SK-N-SH (cell line): ENCODE measurements at regions of chr16 and their contacts with region 1.

Region 1: GRCh38 chr16:23060458-23061320 is 88.6 kb downstream of the USP31 start:
- DNase-seq: peak; percentile 75
- H3K4me3 ChIP-seq: no peak overlapping the region; a peak in 1 of 4 replicates
- H3K27ac ChIP-seq: no peak overlapping the region
- H3K4me1 ChIP-seq: peaks cover 0 to 2% of the 10 kb centered on the region in 2 experiments; a peak in 1 of 4 replicates
- H3K27me3 ChIP-seq: no peaks in the 10 kb centered on the region
- CTCF ChIP-seq: peak; percentile 85
- EP300 ChIP-seq: no peak
- RAD21 ChIP-seq: peak; percentile 92

Region 2: GRCh38 chr16:23013481-23013880 is 47.2 kb before region 1 on chr16:
- CTCF ChIA-PET with region 1: interaction called, 14 read pairs
- POLR2A ChIA-PET with region 1: no interaction called
- DNase-seq: no peak
- H3K4me3 ChIP-seq: no peak overlapping the region
- H3K27ac ChIP-seq: no peak overlapping the region
- H3K4me1 ChIP-seq: no peaks in the 10 kb centered on the region
- H3K27me3 ChIP-seq: no peaks in the 10 kb centered on the region
- CTCF ChIP-seq: peak; percentile 25; the same call in 1 of the 2 replicates
- EP300 ChIP-seq: no peak
- RAD21 ChIP-seq: no peak

Region 3: DNA sequence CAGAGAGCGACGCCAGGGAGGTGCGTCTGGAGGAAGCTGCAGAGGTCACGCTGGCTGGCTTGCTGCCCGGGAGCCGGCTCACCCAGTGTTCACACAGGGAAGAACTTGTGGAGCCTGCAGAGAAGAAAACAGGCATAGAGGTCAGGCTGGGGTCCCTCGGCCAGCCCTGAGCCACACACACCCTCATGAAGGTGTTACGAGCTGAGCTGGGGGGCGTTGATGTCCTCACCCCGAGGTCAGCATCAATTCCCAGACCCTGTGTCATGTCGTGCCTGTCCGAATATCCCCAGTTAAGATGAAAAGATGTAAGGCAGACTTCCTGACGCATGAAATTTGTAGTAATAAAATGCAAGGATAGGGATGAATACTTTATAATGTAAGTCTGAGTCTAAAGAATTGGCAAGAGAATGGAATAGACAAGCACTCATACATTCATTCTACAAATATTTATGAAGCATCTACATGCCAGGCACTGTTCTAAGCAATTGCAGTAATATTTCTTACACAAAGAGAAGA is 11.5 kb after region 1 on chr16:
- CTCF ChIA-PET with region 1: interaction called, 29 read pairs
- POLR2A ChIA-PET with region 1: no interaction called
- DNase-seq: peak; percentile 71
- H3K4me3 ChIP-seq: peak overlapping the region in 1 of 2 experiments; percentile 46; a peak in 3 of 4 replicates
- H3K27ac ChIP-seq: peak overlapping the region; percentile 79 to 91
- H3K4me1 ChIP-seq: peaks cover 21 to 28% of the 10 kb centered on the region in 2 experiments
- H3K27me3 ChIP-seq: no peaks in the 10 kb centered on the region
- CTCF ChIP-seq: no peak
- EP300 ChIP-seq: no peak; a peak in 1 of 4 replicates
- RAD21 ChIP-seq: no peak

Region 4: GRCh38 chr16:23187341-23187740 is 126.7 kb after region 1 on chr16:
- CTCF ChIA-PET with region 1: no interaction called
- POLR2A ChIA-PET with region 1: no interaction called
- DNase-seq: no peak
- H3K4me3 ChIP-seq: no peak overlapping the region
- H3K27ac ChIP-seq: no peak overlapping the region
- H3K4me1 ChIP-seq: peaks cover 0 to 13% of the 10 kb centered on the region in 2 experiments; a peak in 1 of 4 replicates
- H3K27me3 ChIP-seq: peaks cover 36% of the 10 kb centered on the region
- CTCF ChIP-seq: no peak
- EP300 ChIP-seq: no peak
- RAD21 ChIP-seq: no peak